Activated CD8-positive, alpha-beta memory T cell treated with anti-CD3 and anti-CD28 coated beads, Interleukin-2, amount 10 ng/mL, durations not matched to agents 7 days and 5 days (primary cell): ENCODE measurements at regions of chr3 and their contacts with region 1.

Region 1: GRCh38 chr3:141452036-141452435 is 34.8 kb upstream of the RASA2 start:
- DNase-seq: peak; percentile 72
- ATAC-seq: peak; percentile 90
- H3K4me3 Mint-ChIP-seq: no peak overlapping the region
- H3K27ac Mint-ChIP-seq: no peak overlapping the region
- H3K4me1 Mint-ChIP-seq: peaks cover 12% of the 10 kb centered on the region
- H3K27me3 Mint-ChIP-seq: no peaks in the 10 kb centered on the region

Region 2: DNA sequence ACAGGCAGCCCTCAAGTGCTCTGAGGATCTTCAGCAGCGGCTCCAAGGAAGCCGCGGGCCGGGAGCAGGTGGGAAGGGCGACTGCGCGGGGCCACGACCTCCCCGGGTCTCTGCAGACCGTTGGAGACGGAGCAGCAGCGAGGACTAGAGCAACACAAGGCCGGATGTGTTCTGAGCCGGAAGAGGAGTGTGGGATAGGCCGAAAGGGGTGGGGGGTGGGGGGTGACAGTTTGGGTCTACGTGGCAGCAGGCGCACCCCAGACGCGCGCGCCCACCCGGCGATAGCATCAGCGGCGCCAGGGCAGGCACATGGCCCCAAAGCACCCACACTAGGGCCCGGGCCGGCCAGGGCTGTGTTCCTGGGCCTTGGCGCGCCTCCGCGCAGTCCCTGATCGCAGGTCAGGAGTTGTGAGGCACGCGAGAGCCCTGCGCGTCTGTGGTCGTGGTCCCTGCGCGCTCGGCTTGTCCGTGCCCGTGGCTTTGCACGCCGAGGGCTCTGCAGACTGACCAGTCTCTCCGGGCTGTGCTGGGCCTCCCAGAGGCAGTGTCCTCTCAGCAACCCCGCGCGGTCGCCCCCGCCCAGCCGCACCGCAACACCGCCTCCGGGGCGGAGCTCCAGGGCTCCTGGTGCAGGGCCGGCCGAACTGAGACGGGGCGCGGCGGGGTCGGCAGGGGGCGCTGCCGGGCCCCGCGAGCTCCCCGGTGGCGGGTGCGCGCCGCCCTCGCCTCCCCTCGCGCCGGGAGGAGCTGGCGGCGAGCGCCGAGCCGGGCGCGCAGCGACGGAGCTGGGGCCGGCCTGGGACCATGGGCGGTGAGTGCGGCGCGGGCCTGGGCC is 220.7 kb before region 1 on chr3 and contains the start of gene PXYLP1:
- CTCF ChIA-PET with region 1: interaction called, 12 read pairs
- DNase-seq: peak; percentile 95
- ATAC-seq: peak; percentile 95
- H3K4me3 Mint-ChIP-seq: peak within 1 kb of the TSS; percentile 73
- H3K27ac Mint-ChIP-seq: peak within 1 kb of the TSS; percentile 98
- H3K4me1 Mint-ChIP-seq: peaks cover 55% of the 10 kb centered on the region
- H3K27me3 Mint-ChIP-seq: no peaks in the 10 kb centered on the region
- total RNA-seq, gene PXYLP1: 10.3 to 18.4 TPM

Region 3: GRCh38 chr3:141370065-141370533 is 81.9 kb before region 1 on chr3:
- CTCF ChIA-PET with region 1: interaction called, 26 read pairs
- DNase-seq: peak; percentile 85
- ATAC-seq: peak; percentile 96
- H3K4me3 Mint-ChIP-seq: no peak overlapping the region
- H3K27ac Mint-ChIP-seq: peak overlapping the region; percentile 52
- H3K4me1 Mint-ChIP-seq: peaks cover 61% of the 10 kb centered on the region
- H3K27me3 Mint-ChIP-seq: no peaks in the 10 kb centered on the region

Region 4: GRCh38 chr3:141431411-141432378 is 20.3 kb before region 1 on chr3:
- CTCF ChIA-PET with region 1: interaction called, 16 read pairs
- DNase-seq: no peak
- ATAC-seq: no peak
- H3K4me3 Mint-ChIP-seq: no peak overlapping the region
- H3K27ac Mint-ChIP-seq: no peak overlapping the region
- H3K4me1 Mint-ChIP-seq: peaks cover 19% of the 10 kb centered on the region
- H3K27me3 Mint-ChIP-seq: no peaks in the 10 kb centered on the region

Region 5: DNA sequence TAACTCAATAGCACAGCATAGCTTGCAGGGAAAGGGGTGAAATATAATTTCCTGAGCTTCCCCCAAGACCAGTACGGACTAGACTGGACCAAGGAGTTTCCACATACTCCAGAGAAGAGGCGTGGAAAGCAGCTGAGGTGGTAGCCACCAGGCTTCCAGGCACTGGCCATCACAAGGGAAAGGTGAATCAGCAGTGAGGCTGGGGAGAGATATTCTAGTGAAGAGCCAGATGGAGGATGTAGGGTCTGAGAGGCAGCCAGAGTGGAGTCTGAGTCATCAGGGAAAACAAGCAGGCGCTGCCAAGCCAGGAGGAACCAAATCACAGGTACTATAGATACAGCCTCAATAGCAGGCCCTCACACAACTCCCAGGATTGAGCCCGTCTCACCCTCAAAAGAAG is 25.2 kb after region 1 on chr3:
- CTCF ChIA-PET with region 1: interaction called, 15 read pairs
- DNase-seq: no peak
- ATAC-seq: no peak
- H3K4me3 Mint-ChIP-seq: no peak overlapping the region
- H3K27ac Mint-ChIP-seq: no peak overlapping the region
- H3K4me1 Mint-ChIP-seq: peaks cover 31% of the 10 kb centered on the region
- H3K27me3 Mint-ChIP-seq: peaks cover 14% of the 10 kb centered on the region

Region 6: GRCh38 chr3:141644931-141645330 is 192.9 kb after region 1 on chr3:
- CTCF ChIA-PET with region 1: interaction called, 13 read pairs
- DNase-seq: peak; percentile 79
- ATAC-seq: peak; percentile 89
- H3K4me3 Mint-ChIP-seq: no peak overlapping the region
- H3K27ac Mint-ChIP-seq: no peak overlapping the region
- H3K4me1 Mint-ChIP-seq: peaks cover 4% of the 10 kb centered on the region
- H3K27me3 Mint-ChIP-seq: no peaks in the 10 kb centered on the region